Posterior cingulate gyrus (tissue), 11 donors: ENCODE measurements at regions of chr6 and their contacts with region 1.

Region 1: DNA sequence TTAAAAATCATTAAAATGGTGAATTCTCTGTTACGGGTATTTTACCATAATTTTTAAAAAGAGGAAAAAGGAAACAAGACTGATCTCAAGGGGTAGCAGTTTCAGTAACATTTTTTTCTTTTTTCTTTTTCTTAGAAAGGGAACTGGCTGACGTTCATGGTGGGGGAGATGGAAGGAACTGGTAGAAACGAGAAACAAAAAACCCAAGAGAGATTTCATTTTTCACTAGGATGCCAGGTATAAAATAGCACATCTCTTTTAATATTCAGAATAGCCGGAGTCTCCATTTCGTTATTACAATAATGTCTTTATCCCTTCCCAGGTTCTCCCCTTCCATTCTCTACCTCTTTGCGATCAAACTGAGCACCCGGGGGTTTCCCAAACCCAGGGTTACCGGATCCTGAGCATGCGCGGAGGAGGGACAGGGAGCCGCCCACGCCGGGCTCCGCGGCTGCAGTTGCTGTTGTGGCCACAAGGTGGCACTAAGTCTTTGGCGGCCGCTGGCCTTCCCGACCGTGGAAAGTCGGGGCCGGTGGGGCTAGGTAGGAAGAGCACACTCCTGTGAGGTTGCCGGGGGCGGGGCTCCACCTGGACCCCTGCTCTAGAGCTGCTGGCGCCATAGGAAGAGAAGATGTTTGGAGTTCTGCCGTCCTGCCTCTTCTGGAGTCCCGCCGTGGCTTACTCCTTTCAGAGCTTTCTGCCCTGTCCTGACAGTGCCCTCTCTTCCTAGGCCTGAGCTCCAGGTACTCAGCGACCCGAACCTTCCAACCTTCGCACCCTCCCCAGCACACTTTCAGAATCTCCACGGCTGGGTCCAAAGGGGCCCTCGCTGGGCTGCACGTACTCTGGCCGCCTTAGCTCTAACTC is 146.8 kb downstream of the SH3BGRL2 start:
- DNase-seq: peak; percentile 61 to 97 (median 82)

Region 2: DNA sequence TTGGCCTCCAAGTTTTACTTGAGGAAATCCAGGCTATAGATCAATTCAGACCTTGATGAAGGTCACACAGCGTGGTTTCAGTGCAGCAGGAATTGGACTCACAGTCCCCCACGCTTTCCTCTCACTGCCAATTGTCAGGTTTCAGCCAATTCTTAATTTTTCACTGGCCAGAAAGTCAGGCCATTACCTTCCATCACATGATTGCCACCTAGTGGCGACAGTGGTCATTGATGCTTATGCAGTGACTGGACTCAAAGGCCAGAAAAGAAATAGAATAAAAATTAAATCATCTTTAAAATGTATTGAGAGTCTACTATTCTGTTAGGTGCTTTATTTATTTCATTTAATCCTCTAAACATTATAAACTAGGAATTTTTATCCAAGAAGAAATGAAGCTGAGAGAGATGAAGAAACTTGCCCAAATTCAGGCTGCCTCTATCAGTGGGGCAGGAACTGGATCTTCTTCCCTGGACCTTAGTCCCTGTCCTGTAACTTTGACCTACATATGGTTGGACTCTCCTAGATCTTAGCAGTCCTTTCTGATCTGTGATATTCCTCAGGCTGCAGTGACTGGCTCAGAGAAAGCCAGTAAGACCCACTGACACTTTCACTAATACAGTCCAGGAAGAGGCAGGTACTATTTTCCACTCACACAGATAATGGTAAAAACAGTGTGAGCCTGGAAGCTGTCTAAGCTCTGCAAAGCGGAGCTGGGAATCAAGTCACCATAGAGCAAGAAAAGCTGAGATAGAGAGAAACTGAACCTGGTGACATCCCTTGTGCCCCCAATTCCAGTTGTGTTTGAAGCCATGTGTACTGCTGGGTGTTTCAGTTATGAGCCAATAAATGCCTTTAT is 36.1 kb after region 1 on chr6:
- intact Hi-C with region 1: loop called (anchors 5 kb)
- DNase-seq: peak; percentile 34 to 94 (median 80)

Region 3: GRCh38 chr6:79869600-79870084 is 91.7 kb after region 1 on chr6:
- intact Hi-C with region 1: loop called (anchors 1 kb)
- DNase-seq: peak; percentile 68 to 97 (median 77)

Region 4: GRCh38 chr6:79888587-79888986 is 110.6 kb after region 1 on chr6:
- intact Hi-C with region 1: no loop called
- DNase-seq: no peak